Sciatic nerve (tissue), 2 donors: ENCODE measurements at regions of chr11 and their contacts with region 1.

Region 1: DNA sequence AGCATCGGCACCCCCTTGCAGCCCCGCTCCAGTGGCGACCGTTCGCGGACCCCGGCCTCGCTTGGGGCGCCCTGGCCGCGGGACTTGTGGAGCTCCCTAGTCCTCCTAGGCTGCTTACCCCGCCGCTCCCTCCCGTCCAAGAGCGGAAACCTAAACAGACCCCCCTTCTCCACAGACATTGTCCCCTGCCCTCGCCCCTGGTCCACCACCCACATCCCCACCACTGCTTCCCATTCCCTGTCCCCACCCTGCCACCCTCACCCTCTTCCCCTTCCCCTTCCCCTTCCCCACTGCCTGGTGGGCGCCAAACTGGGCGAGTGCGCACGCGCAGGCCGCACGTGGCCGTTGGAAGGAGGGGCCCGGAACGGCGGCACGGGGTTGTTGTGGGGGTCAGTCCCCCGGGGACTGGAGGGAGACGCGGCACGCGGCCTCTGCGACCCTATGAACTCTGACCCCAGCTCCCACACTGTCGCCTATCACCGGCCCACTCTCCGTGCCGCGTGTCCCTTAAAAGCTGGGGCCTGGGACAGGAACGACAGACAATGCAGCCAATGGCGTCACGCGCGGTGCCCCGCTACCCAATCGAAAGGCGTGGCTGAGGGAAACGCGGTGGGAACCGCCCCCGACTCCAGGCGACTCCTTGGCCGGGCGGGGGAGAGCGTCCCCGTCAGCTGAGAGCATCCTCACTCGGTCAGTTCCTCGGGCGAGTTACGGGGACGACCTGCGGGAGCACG is at the start of gene SNX32:
- DNase-seq: peak; percentile 97
- ATAC-seq: peak; percentile 100
- total RNA-seq, gene SNX32: 2.6 TPM

Region 2: GRCh38 chr11:65454696-65455456 is 378.6 kb before region 1 on chr11:
- intact Hi-C with region 1: loop called (anchors 5 kb)
- DNase-seq: peak; percentile 95
- ATAC-seq: peak; percentile 95